ENCODE measurements at regions of chr10 and their contacts with region 1.

Region 1: GRCh38 chr10:99612167-99612831 is 7.9 kb downstream of the SLC25A28 start:
- DNase-seq: peak in 1 of 2 donors; percentile 48
- ATAC-seq: peak in 7 of 8 donors; percentile 55 to 80 (median 66)
- H3K4me3 ChIP-seq: no peak overlapping the region
- H3K27ac ChIP-seq: peak overlapping the region in 1 of 10 donors; percentile 12
- H3K4me1 ChIP-seq: peaks cover 4 to 30% (median 19%) of the 10 kb centered on the region in 9 donors
- H3K27me3 ChIP-seq: no peaks in the 10 kb centered on the region
- CTCF ChIP-seq: peak; percentile 68 to 86 (median 84)

Region 2: DNA sequence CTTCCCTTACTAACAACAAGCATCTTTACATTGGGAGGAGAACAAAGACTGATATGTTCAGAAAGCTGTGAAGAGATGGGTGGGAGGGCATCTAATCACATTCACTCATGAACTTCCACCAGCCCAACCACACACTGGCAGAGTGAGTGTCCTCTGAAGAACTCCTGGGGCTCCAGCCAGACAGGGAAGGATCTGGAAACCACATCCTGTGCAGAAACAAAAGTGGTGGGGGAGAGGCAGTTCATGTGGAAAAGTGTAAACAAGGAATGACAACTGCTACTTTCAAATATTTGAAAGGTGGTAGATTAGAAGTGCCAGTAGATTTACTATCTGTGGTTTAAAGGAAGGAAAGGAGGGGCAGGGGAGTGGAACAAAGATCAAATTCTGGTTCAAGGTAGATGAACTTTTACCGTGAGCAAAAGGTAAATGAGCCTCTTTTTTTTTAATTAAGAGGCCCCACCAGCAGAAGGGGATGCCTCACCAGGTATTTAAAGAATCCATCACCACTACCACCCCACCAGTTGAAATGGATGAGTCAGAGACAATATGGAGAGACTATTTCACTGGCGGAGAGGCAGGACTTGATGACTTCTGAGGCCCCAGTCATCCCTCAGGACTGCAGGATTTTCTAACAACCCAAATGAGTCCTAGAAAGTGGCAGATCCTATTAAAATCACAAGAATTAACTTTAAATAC is 216.4 kb before region 1 on chr10:
- intact Hi-C with region 1: loop called (anchors 1 to 5 kb)
- DNase-seq: no peak
- ATAC-seq: peak in 3 of 8 donors; percentile 47 to 50 (median 48)
- H3K4me3 ChIP-seq: no peak overlapping the region
- H3K27ac ChIP-seq: peak overlapping the region in 1 of 10 donors; percentile 15
- H3K4me1 ChIP-seq: peaks cover 0 to 53% (median 21%) of the 10 kb centered on the region in 9 donors
- H3K27me3 ChIP-seq: no peaks in the 10 kb centered on the region
- CTCF ChIP-seq: no peak

Region 3: DNA sequence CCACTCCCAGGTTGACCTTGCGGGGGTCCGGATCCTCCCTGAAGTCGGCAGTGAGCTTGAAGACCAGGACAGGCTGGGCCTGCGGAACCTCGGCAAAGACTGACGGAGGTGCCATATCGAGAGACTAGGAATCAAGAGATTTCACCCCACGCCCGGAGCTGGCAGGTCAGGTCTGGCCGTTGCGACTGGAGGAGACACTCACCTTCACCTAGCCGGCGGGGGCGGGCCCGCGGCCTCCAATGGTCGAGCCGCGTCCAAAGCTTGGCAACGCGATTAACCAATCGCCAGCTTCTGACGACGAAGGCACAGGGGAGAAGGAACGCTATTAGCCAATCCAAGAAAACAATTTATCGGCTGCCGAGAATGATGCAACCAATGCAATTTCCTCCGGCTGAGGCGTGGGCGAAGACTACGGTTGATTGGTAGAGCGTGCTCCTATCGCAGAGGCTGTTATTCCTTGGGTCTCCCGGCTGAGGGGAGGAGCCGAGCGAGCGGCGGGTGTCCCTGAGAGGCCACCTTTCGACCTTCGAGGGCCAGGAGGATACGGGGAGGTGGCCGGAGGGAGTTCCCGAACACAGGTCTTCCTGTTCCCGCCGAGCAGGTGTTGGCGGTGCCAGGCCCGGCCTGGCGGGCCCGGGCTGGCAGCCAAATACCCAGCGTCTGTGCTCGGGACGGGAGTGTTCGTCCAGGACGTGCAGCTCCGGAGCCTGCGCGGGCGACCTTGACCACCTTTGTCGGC is 181.7 kb before region 1 on chr10 and contains the start of gene GOT1:
- intact Hi-C with region 1: loop called in 9 of 10 experiments (anchors 2 to 10 kb)
- DNase-seq: peak; percentile 91 to 98
- ATAC-seq: peak; percentile 95 to 97 (median 97)
- H3K4me3 ChIP-seq: peak within 1 kb of the TSS; percentile 68 to 96 (median 86)
- H3K27ac ChIP-seq: peak within 1 kb of the TSS; percentile 90 to 99 (median 96)
- H3K4me1 ChIP-seq: peaks cover 0 to 76% (median 36%) of the 10 kb centered on the region in 9 donors
- H3K27me3 ChIP-seq: no peaks in the 10 kb centered on the region
- CTCF ChIP-seq: no peak
- total RNA-seq, gene GOT1: 362 to 669 (median 586) TPM

Region 4: DNA sequence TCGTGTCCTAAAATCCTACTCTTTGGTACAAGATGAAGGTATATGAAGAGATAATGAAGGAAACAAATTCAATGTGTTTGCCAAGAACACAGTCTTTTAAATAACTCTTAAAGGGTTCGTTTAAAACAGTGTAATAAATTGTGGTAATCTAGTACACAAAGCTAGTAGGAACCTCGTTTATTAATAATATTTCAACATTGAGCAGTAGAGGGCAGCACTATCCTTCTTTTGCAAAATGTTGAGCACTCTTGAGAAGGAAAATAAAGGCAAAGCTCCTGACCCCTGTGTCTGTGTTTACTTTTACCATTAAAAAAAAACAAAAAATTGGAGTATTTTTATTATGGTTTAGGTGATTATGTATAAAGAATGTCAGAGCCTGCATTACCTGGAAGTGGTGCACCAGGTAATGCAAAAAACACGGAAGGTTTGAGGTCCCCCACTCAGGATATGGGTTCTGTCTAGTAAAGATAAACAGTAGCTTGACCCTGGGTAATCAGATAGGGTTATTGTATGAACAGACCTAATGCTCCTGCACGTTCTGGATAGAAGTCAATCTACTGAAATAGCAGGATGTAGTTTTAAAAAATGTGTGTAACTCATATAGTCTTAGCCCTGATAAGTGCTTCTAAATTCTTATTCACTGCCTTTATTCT is 176.2 kb before region 1 on chr10:
- intact Hi-C with region 1: loop called (anchors 2 to 10 kb)
- DNase-seq: no peak
- ATAC-seq: peak in 4 of 8 donors; percentile 19 to 40 (median 34)
- H3K4me3 ChIP-seq: no peak overlapping the region
- H3K27ac ChIP-seq: peak overlapping the region in 1 of 10 donors; percentile 11
- H3K4me1 ChIP-seq: peaks cover 0 to 59% (median 25%) of the 10 kb centered on the region in 9 donors
- H3K27me3 ChIP-seq: no peaks in the 10 kb centered on the region
- CTCF ChIP-seq: peak; percentile 39 to 72 (median 61)

Measured in heart right ventricle (tissue), 16 donors.